Caco-2 (cell line): ENCODE measurements at regions of chr2 and their contacts with region 1.

Region 1: GRCh38 chr2:41933585-41934320 is 114.1 kb upstream of the PKDCC start:
- DNase-seq: no peak
- H3K4me3 ChIP-seq: no peak overlapping the region
- H3K4me3 Mint-ChIP-seq: no peak overlapping the region
- H3K27ac Mint-ChIP-seq: peak overlapping the region; percentile 80
- H3K4me1 ChIP-seq: peaks cover 53% of the 10 kb centered on the region
- H3K4me1 Mint-ChIP-seq: peaks cover 37% of the 10 kb centered on the region
- H3K27me3 ChIP-seq: no peaks in the 10 kb centered on the region
- H3K27me3 Mint-ChIP-seq: no peaks in the 10 kb centered on the region
- CTCF ChIP-seq: no peak

Region 2: DNA sequence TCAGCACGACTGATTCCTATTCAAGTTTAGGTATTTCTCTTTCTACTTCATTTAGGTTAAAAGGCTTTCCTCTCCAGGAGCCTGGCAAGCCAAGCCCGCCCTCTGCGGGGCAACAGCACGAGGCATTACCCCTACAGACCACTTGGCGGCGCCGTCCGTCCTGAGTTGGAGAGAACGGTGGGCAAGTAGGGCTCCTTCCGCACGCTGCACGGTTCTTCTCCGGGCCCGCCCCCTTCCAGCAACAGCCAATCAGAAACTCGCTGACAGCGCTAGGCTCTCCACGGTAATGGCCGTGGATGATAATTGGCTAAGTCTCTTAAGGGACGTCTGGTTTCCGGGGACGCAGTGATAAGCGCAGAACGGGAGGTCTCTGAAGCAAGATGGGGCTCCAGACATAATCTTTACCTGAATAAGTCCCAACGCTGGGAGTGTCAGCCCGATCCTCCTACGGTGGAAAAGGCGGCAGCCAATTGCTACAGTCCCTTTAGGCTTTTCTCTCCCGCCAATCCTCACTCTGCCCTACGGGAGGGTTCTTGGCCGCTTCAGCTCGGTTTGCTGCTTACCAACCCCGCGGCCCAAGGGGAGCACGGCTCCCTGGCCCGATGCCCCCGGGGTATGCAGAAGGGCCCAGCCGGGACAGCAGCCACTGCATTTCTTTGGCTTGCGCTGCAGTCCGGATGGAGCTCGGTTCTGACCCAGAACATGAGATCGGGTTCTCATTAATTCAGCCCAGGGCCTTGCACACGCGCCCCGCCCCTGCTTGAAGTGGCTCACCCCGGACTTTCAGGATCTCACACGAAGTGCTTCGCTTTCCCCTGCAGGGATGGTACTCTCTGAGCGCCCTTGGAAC is 92.8 kb before region 1 on chr2:
- CTCF ChIA-PET with region 1: no interaction called
- POLR2A ChIA-PET with region 1: no interaction called
- intact Hi-C with region 1: no loop called
- DNase-seq: peak; percentile 98 to 99
- H3K4me3 ChIP-seq: peak overlapping the region; percentile 56
- H3K4me3 Mint-ChIP-seq: peak overlapping the region; percentile 91
- H3K27ac Mint-ChIP-seq: peak overlapping the region; percentile 77
- H3K4me1 ChIP-seq: no peaks in the 10 kb centered on the region
- H3K4me1 Mint-ChIP-seq: no peaks in the 10 kb centered on the region
- H3K27me3 ChIP-seq: no peaks in the 10 kb centered on the region
- H3K27me3 Mint-ChIP-seq: peaks cover 3% of the 10 kb centered on the region
- CTCF ChIP-seq: peak; percentile 98 to 100

Region 3: DNA sequence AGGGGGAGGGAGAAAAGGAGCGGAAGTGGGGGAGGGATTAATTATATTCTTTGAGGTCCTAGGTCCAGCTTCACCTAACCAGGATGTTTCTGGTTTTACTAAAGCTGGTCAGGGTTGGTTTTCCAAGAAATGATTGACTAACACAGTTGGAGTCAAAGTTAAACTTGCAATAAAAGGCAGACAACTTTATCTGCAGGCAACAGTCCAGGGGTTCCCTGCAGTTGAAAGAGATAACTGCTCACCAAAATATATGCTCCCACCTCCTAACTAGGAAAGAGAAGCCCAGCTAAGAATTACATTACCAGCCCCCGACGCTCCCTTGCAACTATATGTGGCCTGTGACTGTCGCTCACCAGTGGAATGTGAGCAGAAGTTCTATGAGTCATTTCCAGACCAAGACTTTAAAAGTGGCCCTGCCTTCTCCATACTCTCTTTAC is 26.0 kb before region 1 on chr2:
- CTCF ChIA-PET with region 1: no interaction called
- POLR2A ChIA-PET with region 1: no interaction called
- intact Hi-C with region 1: no loop called
- DNase-seq: no peak
- H3K4me3 ChIP-seq: no peak overlapping the region
- H3K4me3 Mint-ChIP-seq: no peak overlapping the region
- H3K27ac Mint-ChIP-seq: no peak overlapping the region
- H3K4me1 ChIP-seq: peaks cover 14% of the 10 kb centered on the region
- H3K4me1 Mint-ChIP-seq: peaks cover 23% of the 10 kb centered on the region
- H3K27me3 ChIP-seq: no peaks in the 10 kb centered on the region
- H3K27me3 Mint-ChIP-seq: no peaks in the 10 kb centered on the region
- CTCF ChIP-seq: no peak

Region 4: DNA sequence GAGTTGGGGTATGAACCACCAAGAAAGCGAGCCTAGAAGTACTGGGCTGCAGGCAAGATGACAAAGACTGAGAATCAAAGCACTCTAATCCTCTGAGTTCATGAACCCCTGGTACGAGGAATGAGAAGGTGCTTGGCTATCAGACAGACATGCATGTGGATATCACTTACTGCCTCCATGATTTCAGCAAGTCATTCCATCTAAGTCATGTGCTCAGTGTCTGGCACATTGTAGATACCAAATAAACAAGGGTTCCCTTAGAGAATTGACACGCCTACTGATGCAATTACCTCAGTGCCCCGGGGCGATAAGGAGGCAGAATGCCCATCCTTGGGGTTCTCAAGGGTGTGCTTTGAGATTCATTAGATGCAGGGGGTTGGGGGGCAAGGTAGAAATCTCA is 11.6 kb before region 1 on chr2:
- CTCF ChIA-PET with region 1: no interaction called
- POLR2A ChIA-PET with region 1: interaction called, 4 read pairs
- intact Hi-C with region 1: loop called (anchors 1 kb)
- DNase-seq: peak; percentile 51 to 61
- H3K4me3 ChIP-seq: no peak overlapping the region
- H3K4me3 Mint-ChIP-seq: no peak overlapping the region
- H3K27ac Mint-ChIP-seq: peak overlapping the region; percentile 74
- H3K4me1 ChIP-seq: peaks cover 25% of the 10 kb centered on the region
- H3K4me1 Mint-ChIP-seq: peaks cover 29% of the 10 kb centered on the region
- H3K27me3 ChIP-seq: no peaks in the 10 kb centered on the region
- H3K27me3 Mint-ChIP-seq: no peaks in the 10 kb centered on the region
- CTCF ChIP-seq: no peak

Region 5: DNA sequence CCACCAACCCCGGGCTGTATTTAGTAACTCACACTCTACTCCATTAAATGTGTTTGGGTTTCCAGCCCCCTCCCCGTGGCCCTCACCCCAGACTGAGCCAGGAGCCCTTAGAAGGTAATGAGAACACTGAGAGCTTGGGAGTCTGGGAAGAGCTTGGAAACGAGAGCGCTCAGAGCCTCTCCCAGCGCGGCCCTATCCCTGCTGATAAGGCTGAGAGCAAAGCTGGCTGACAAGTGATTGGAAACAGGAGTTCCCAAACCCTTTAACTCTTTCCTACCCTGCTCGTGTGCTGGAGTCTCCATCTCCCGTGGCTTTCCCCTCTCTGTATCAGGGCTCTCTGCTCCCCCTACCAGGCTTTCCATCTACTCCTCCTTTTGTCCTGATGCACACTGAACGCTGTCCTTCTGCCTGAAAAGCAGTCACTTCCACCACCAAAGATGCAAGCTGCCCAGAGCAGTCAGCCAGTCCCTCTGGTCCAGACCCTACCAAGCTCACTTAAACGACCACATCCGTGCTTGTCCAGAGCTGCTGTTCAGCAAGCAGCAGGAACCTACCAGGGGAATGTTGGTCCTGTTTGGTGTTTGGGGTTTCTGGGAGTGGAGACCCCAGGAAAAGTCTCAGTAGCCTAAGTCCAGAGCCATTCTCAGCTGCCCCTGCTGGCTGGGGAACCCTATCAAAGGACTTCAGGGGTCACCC is 14.1 kb after region 1 on chr2:
- CTCF ChIA-PET with region 1: no interaction called
- POLR2A ChIA-PET with region 1: interaction called, 12 read pairs
- intact Hi-C with region 1: no loop called
- DNase-seq: peak; percentile 32 to 54
- H3K4me3 ChIP-seq: no peak overlapping the region
- H3K4me3 Mint-ChIP-seq: peak overlapping the region; percentile 12
- H3K27ac Mint-ChIP-seq: peak overlapping the region; percentile 21
- H3K4me1 ChIP-seq: peaks cover 37% of the 10 kb centered on the region
- H3K4me1 Mint-ChIP-seq: peaks cover 36% of the 10 kb centered on the region
- H3K27me3 ChIP-seq: no peaks in the 10 kb centered on the region
- H3K27me3 Mint-ChIP-seq: no peaks in the 10 kb centered on the region
- CTCF ChIP-seq: no peak

Region 6: DNA sequence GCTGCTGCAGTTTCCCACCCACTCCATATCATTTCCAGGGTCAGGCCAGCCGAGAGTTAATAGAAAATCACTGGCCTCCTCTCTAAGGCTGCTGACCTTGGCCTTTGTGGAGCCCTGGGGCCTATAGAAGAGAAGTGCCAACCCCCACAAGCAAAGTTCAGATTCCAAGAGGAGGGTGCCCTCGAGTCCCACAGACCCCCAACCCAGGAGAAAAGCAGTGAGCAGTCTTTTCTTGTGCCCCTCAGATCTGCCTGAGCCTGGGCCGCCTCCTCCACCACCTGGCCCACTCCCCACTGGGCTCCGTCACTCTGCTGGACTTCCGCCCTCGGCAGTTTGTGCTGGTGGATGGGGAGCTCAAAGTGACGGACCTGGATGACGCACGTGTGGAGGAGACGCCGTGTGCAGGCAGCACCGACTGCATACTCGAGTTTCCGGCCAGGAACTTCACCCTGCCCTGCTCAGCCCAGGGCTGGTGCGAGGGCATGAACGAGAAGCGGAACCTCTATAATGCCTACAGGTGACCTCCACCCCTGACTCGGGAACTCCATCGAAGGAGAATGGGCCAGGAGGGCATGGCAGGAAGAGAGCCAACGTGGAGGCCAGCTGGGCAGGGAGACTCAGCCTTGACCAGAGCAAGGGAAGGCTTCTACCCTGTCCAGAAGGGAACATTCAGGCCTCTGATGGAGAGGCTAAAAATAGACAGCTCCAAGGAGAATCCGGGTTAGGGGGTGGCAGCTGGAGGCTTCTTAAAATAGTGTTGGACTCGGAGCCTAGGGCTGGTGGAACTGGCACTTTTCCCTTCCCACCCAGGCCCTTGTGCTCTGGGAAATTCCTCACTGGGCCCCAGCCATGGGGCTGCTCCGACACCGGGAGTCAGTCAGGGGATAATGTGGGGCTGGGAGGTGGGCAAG is 120.3 kb after region 1 on chr2:
- CTCF ChIA-PET with region 1: no interaction called
- POLR2A ChIA-PET with region 1: interaction called, 6 read pairs
- intact Hi-C with region 1: loop called (anchors 2 kb)
- DNase-seq: no peak
- H3K4me3 ChIP-seq: no peak overlapping the region
- H3K4me3 Mint-ChIP-seq: peak overlapping the region; percentile 69
- H3K27ac Mint-ChIP-seq: peak overlapping the region; percentile 98
- H3K4me1 ChIP-seq: peaks cover 85% of the 10 kb centered on the region
- H3K4me1 Mint-ChIP-seq: peaks cover 60% of the 10 kb centered on the region
- H3K27me3 ChIP-seq: no peaks in the 10 kb centered on the region
- H3K27me3 Mint-ChIP-seq: no peaks in the 10 kb centered on the region
- CTCF ChIP-seq: no peak